Gastrocnemius medialis (tissue), 4 donors: ENCODE measurements at regions of chr2 and their contacts with region 1.

Region 1: GRCh38 chr2:27211829-27212627 is at the starts of genes ATRAID and SLC5A6:
- DNase-seq: peak; percentile 81 to 84
- ATAC-seq: peak; percentile 90 to 92
- H3K4me3 ChIP-seq: peak within 1 kb of the TSS; percentile 83 to 94 (median 87)
- H3K27ac ChIP-seq: peak within 1 kb of the TSS; percentile 94 to 99 (median 98)
- H3K4me1 ChIP-seq: peaks cover 15 to 18% of the 10 kb centered on the region in 2 donors
- H3K27me3 ChIP-seq: no peaks in the 10 kb centered on the region
- CTCF ChIP-seq: no peak
- POLR2A ChIP-seq: peak; percentile 87 to 89
- total RNA-seq, gene ATRAID: 131 to 203 (median 171) TPM
- total RNA-seq, gene SLC5A6: 19.0 to 46.5 (median 32.5) TPM

Region 2: GRCh38 chr2:27133905-27134780 is 77.9 kb before region 1 on chr2 and contains the start of gene PREB:
- in situ Hi-C with region 1: no loop called
- intact Hi-C with region 1: loop called (anchors 1 kb)
- DNase-seq: peak; percentile 88 to 95
- ATAC-seq: peak; percentile 89 to 91
- H3K4me3 ChIP-seq: peak within 1 kb of the TSS; percentile 79 to 100 (median 88)
- H3K27ac ChIP-seq: peak within 1 kb of the TSS; percentile 84 to 99 (median 96)
- H3K4me1 ChIP-seq: peaks cover 15 to 16% of the 10 kb centered on the region in 2 donors
- H3K27me3 ChIP-seq: no peaks in the 10 kb centered on the region
- CTCF ChIP-seq: peak in 1 of 5 experiments; percentile 11
- POLR2A ChIP-seq: peak; percentile 87 to 98
- total RNA-seq, gene PREB: 117 to 197 (median 154) TPM

Region 3: DNA sequence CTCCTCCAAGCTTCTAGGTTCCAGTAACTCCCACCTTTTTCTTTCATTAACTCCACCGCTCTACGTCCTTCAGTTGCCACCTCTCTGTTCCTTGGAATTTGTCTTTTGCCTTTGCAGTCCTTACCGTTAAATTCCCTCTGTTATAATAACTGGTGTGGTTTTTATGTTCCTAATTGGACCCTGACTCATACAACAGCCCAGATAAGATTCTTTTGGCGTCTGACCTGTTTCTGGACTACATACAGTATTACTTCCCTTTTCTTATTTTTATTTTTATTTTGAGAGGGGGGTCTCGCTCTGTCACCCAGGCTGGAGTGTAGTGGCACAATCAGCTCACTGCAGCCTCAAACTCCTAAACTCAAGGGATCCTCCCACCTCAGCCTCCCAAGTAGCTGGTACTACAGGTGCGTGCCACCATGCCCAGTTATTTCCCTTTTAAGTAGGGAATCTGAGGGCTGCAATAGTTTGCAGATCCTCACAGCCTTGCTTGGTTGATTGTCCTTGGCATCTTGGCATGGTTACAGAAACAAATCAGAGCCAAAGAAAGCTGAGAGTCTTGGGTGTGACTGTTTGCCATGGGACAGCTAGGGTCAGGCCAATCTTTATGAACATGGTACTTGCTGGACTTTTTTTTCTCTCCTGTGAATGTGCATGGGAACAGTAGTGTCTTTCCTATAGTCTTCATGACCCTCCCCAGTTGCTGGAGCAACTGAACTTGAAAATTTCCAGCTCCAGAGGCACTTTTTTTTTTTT is 41.3 kb before region 1 on chr2:
- in situ Hi-C with region 1: no loop called
- intact Hi-C with region 1: no loop called
- DNase-seq: peak in 1 of 2 donors; percentile 12
- ATAC-seq: peak; percentile 37 to 81
- H3K4me3 ChIP-seq: no peak overlapping the region
- H3K27ac ChIP-seq: no peak overlapping the region
- H3K4me1 ChIP-seq: peaks cover 5 to 12% of the 10 kb centered on the region in 2 donors
- H3K27me3 ChIP-seq: no peaks in the 10 kb centered on the region
- CTCF ChIP-seq: no peak
- POLR2A ChIP-seq: no peak

Region 4: GRCh38 chr2:27356382-27357181 is 144.6 kb after region 1 on chr2 and contains the start of gene GTF3C2:
- in situ Hi-C with region 1: no loop called
- intact Hi-C with region 1: loop called (anchors 5 kb)
- DNase-seq: peak; percentile 90 to 95
- ATAC-seq: peak; percentile 82 to 88
- H3K4me3 ChIP-seq: peak within 1 kb of the TSS; percentile 69 to 98 (median 93)
- H3K27ac ChIP-seq: peak within 1 kb of the TSS; percentile 92 to 99 (median 94)
- H3K4me1 ChIP-seq: peaks cover 42 to 50% of the 10 kb centered on the region in 2 donors
- H3K27me3 ChIP-seq: no peaks in the 10 kb centered on the region
- CTCF ChIP-seq: peak in 2 of 5 experiments; percentile 26 to 46
- POLR2A ChIP-seq: peak; percentile 50
- total RNA-seq, gene GTF3C2: 25.3 to 45.6 (median 40.5) TPM